MCF 10A (cell line): ENCODE measurements at regions of chrX and their contacts with region 1.

Region 1: GRCh38 chrX:100379388-100379986 is 30.6 kb downstream of the PCDH19 start:
- DNase-seq: peak; percentile 62
- H3K4me3 Mint-ChIP-seq: no peak overlapping the region
- H3K27ac Mint-ChIP-seq: peak overlapping the region; percentile 3
- H3K4me1 Mint-ChIP-seq: peaks cover 19% of the 10 kb centered on the region
- H3K27me3 Mint-ChIP-seq: peaks cover 45% of the 10 kb centered on the region
- CTCF ChIP-seq: peak; percentile 56

Region 2: DNA sequence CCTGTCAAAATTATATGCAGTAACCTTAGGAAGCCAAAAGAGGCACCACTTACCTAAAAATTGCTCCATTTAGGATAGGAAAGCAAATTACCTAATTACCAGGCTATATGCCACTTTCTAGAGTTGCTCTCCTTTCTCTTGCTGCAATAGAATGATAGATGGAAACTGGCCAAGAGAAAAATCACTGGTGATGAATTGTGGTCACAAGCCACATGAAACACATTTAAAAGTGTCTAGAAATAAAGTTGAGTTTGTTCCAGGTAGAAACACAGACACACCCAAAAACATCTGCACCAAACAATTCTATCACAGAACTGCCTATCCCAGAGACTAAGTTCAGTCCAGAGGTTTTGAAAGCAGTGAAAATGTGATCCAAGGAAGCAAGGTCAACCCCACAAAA is 307.2 kb before region 1 on chrX:
- CTCF ChIA-PET with region 1: interaction called, 3 read pairs
- POLR2A ChIA-PET with region 1: interaction called, 3 read pairs
- intact Hi-C with region 1: loop called (anchors 1 kb)
- DNase-seq: peak; percentile 26
- H3K4me3 Mint-ChIP-seq: no peak overlapping the region
- H3K27ac Mint-ChIP-seq: no peak overlapping the region
- H3K4me1 Mint-ChIP-seq: no peaks in the 10 kb centered on the region
- H3K27me3 Mint-ChIP-seq: peaks cover 11% of the 10 kb centered on the region
- CTCF ChIP-seq: peak; percentile 15

Region 3: GRCh38 chrX:100194082-100194775 is 185.3 kb before region 1 on chrX:
- CTCF ChIA-PET with region 1: no interaction called
- POLR2A ChIA-PET with region 1: no interaction called
- intact Hi-C with region 1: no loop called
- DNase-seq: no peak
- H3K4me3 Mint-ChIP-seq: no peak overlapping the region
- H3K27ac Mint-ChIP-seq: no peak overlapping the region
- H3K4me1 Mint-ChIP-seq: no peaks in the 10 kb centered on the region
- H3K27me3 Mint-ChIP-seq: peaks cover 86% of the 10 kb centered on the region
- CTCF ChIP-seq: no peak

Region 4: GRCh38 chrX:100368167-100368566 is 11.3 kb before region 1 on chrX:
- CTCF ChIA-PET with region 1: interaction called, 76 read pairs
- POLR2A ChIA-PET with region 1: interaction called, 5 read pairs
- intact Hi-C with region 1: no loop called
- DNase-seq: peak; percentile 53
- H3K4me3 Mint-ChIP-seq: no peak overlapping the region
- H3K27ac Mint-ChIP-seq: no peak overlapping the region
- H3K4me1 Mint-ChIP-seq: no peaks in the 10 kb centered on the region
- H3K27me3 Mint-ChIP-seq: peaks cover 59% of the 10 kb centered on the region
- CTCF ChIP-seq: peak; percentile 60

Region 5: GRCh38 chrX:100587885-100588284 is 208.4 kb after region 1 on chrX:
- CTCF ChIA-PET with region 1: no interaction called
- POLR2A ChIA-PET with region 1: no interaction called
- intact Hi-C with region 1: no loop called
- DNase-seq: no peak
- H3K4me3 Mint-ChIP-seq: no peak overlapping the region
- H3K27ac Mint-ChIP-seq: no peak overlapping the region
- H3K4me1 Mint-ChIP-seq: no peaks in the 10 kb centered on the region
- H3K27me3 Mint-ChIP-seq: peaks cover 85% of the 10 kb centered on the region
- CTCF ChIP-seq: no peak

Region 6: GRCh38 chrX:101595739-101596419 is 1216.4 kb after region 1 on chrX:
- CTCF ChIA-PET with region 1: no interaction called
- POLR2A ChIA-PET with region 1: no interaction called
- intact Hi-C with region 1: no loop called
- DNase-seq: peak; percentile 71
- H3K4me3 Mint-ChIP-seq: no peak overlapping the region
- H3K27ac Mint-ChIP-seq: no peak overlapping the region
- H3K4me1 Mint-ChIP-seq: no peaks in the 10 kb centered on the region
- H3K27me3 Mint-ChIP-seq: peaks cover 44% of the 10 kb centered on the region
- CTCF ChIP-seq: peak; percentile 65